ENCODE measurements at regions of chr2 and their contacts with region 1.

Region 1: GRCh38 chr2:36785179-36785795 is 88.8 kb downstream of the VIT start:
- DNase-seq: peak; percentile 7
- H3K4me3 ChIP-seq: no peak overlapping the region
- CTCF ChIP-seq: peak; percentile 86

Region 2: GRCh38 chr2:36753706-36754221 is 31.5 kb before region 1 on chr2:
- CTCF ChIA-PET with region 1: interaction called, 18 read pairs
- POLR2A ChIA-PET with region 1: no interaction called
- DNase-seq: no peak
- H3K4me3 ChIP-seq: no peak overlapping the region
- CTCF ChIP-seq: no peak

Region 3: DNA sequence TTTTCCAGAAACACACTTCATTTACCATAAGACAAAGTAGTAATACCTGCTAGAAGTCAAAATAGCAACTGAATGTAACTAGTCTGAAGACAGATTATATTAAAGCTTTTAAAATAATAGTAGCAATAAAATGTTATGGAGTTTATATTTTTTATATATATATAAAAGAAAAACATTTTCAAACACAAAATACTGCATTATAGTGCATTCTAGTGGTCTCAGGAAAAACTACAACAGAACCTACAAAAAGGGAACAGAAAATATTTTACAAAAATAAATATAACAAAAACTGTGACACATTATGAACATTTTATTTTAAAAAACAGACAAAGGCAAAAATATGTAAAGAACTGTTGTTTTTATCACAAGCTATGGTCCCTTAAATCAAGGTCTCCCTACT is 133.0 kb after region 1 on chr2:
- CTCF ChIA-PET with region 1: interaction called, 23 read pairs
- POLR2A ChIA-PET with region 1: no interaction called
- DNase-seq: no peak
- H3K4me3 ChIP-seq: no peak overlapping the region
- CTCF ChIP-seq: no peak